ENCODE measurements at regions of chr14 and their contacts with region 1.

Region 1: DNA sequence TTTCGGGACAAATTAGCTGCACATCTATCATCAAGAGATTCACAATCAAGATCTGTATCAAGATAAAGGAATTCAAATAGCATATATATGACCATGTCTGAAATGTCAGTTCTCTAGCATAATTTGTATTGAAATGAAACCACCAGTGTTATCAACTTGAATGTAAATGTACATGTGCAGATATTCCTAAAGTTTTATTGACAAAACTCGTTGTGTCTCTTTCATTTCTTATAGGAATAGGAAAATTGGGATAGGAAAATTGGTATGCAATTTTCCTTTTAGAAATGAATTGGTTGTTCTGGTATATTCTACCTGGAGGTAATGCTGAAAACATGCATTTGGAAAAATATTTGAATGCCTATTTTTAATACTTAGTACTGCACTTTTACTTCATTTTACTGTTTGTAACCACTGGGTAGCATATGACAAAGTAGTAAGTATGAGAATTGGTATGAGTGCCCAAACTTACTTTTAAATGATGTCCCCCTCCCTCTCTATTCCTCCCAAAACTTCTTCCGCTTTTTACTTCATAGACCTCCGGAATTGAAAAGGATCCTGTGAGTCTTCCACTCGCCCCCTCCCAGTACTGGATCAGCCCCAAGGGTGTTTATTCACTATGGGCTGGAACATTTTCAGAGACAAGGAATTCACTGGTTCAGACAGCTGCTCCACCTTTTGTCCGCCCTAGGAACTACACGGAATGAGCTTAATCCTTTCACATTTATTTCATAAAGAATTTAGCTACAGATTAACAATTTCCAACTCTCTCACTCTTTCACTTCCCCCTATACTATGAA is 21.0 kb downstream of the CNIH1 start:
- DNase-seq: no peak
- ATAC-seq: peak; percentile 82
- H3K4me3 ChIP-seq: no peak overlapping the region
- H3K27ac ChIP-seq: no peak overlapping the region
- H3K4me1 ChIP-seq: no peaks in the 10 kb centered on the region
- H3K27me3 ChIP-seq: no peaks in the 10 kb centered on the region
- CTCF ChIP-seq: peak; percentile 70

Region 2: GRCh38 chr14:54366736-54367735 is 53.2 kb before region 1 on chr14:
- CTCF ChIA-PET with region 1: interaction called, 4 read pairs
- POLR2A ChIA-PET with region 1: no interaction called
- in situ Hi-C with region 1: no loop called
- intact Hi-C with region 1: loop called (anchors 5 kb)
- DNase-seq: peak; percentile 17
- ATAC-seq: peak; percentile 97
- H3K4me3 ChIP-seq: no peak overlapping the region
- H3K27ac ChIP-seq: no peak overlapping the region
- H3K4me1 ChIP-seq: no peaks in the 10 kb centered on the region
- H3K27me3 ChIP-seq: no peaks in the 10 kb centered on the region
- CTCF ChIP-seq: peak; percentile 78

Region 3: GRCh38 chr14:54435500-54435981 is 15.3 kb after region 1 on chr14:
- CTCF ChIA-PET with region 1: no interaction called
- POLR2A ChIA-PET with region 1: no interaction called
- in situ Hi-C with region 1: no loop called
- intact Hi-C with region 1: no loop called
- DNase-seq: no peak
- ATAC-seq: 0 out of 2 replicates have a peak, but pooled peaks have one; percentile 45
- H3K4me3 ChIP-seq: no peak overlapping the region
- H3K27ac ChIP-seq: no peak overlapping the region
- H3K4me1 ChIP-seq: peaks cover 23% of the 10 kb centered on the region
- H3K27me3 ChIP-seq: no peaks in the 10 kb centered on the region
- CTCF ChIP-seq: no peak

Region 4: DNA sequence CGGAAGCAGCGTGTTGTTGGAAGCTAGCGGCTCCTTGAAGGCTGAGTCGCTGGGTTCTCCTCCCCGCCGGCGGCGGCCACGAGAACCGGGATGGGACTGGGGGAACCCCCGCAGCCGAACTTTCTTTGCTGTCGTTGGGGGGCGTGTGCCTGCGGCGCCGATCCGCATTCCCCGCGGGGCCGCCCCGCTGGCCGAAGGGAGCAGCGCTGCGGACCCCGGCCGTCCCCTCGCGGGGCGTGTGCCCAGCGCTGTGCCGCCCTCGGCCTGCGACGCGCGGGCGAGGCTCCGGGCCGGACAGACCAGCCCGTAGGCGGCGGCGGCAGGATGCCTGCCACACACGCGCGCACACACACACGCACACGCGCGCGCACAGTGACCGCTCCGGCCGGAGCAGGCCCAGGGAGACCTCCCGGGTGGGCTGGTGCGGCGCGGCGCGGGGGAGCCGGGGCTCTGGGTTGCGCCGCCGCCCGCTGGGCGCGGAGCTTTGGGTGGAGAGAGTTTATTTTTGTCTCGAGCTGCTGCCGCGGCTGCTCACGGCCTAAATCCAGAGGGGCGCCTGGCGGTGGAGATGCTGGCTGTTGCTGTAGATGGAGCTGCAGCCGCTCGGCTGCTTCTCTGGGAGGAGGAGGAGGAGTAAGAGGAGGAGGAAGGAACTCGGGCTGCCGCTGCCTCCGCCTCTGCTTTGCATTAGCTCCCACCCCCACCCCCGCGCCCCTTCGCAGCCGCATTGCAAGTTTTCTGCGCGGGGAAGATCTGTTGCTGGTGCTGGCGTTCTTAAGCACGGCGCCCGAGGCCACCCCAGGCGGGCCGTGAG is 146.4 kb after region 1 on chr14 and contains the start of gene SAMD4A:
- CTCF ChIA-PET with region 1: no interaction called
- POLR2A ChIA-PET with region 1: no interaction called
- in situ Hi-C with region 1: no loop called
- intact Hi-C with region 1: no loop called
- DNase-seq: no peak
- ATAC-seq: peak; percentile 67
- H3K4me3 ChIP-seq: peak within 1 kb of the TSS; percentile 64 to 79
- H3K27ac ChIP-seq: peak within 1 kb of the TSS; percentile 84
- H3K4me1 ChIP-seq: peaks cover 22% of the 10 kb centered on the region
- H3K27me3 ChIP-seq: no peaks in the 10 kb centered on the region
- CTCF ChIP-seq: peak; percentile 52
- total RNA-seq, gene SAMD4A: 15.2 TPM

Measured in Panc1 (cell line).